ENCODE measurements at regions of chr3 and their contacts with region 1.

Region 1: DNA sequence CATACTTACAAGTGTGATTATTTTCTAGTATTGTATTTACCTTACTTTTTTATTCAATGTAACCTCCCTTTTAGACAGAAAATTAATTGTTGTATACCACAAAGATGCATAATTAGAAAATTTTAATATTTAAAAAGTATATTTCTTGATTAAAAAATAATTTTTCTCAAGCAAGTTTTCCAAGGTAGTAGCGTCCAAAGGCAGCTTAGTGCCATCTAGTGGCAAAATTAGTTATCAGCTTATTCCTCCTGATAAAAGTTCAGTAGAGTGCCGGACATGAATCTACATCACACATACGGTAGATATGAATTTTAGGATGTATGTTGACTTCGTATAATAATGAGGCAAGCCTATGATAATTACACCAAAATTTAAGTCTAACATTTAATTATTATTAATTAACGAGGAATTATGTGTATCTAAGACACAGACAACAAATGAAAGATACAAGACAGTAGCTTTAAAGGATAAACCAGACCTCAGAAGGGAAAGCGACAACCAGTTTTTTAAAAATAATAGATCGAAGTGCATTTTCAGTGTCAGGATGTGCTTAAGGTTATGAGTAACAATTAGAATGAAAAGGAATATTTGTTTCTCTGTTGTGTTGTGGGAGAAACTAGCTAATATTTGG is 405.9 kb downstream of the ROBO1 start:
- DNase-seq: peak; percentile 20
- CTCF ChIP-seq: peak; percentile 54

Region 2: DNA sequence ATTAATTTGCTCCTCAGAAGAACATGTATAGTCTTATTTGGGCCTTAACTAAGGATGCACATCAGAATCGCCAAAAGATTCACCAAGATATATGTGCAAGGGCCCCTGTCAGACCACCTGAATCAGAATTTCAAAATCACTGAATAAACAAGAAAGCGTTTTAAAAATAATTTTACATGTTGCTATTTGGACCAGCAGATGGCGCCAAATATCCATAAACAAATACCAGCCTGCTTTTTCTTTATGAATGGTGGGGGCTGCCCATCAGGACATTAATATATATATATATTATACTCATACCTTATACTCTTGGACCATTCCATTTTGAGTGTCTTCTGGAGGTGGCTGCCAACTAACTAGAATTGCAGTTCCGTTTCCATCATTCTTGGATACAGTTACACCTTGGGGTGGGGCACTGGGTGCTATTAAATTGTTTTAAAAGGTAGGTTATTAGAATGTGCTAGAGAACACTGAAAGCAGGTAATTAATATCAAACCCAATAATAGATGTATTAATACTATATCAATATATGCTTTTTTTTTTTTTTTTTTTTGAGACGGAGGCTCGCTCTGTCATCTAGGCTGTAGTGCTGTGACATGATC is 702.4 kb before region 1 on chr3:
- in situ Hi-C with region 1: loop called (anchors 25 kb)
- DNase-seq: peak; percentile 11
- CTCF ChIP-seq: peak; percentile 24

Region 3: GRCh38 chr3:79086514-79086913 is 275.3 kb before region 1 on chr3:
- in situ Hi-C with region 1: loop called (anchors 25 kb)
- DNase-seq: peak; percentile 25
- CTCF ChIP-seq: peak; percentile 72

Region 4: GRCh38 chr3:79632842-79633241 is 271.0 kb after region 1 on chr3:
- in situ Hi-C with region 1: no loop called
- DNase-seq: no peak
- CTCF ChIP-seq: no peak